ENCODE measurements at regions of chr11 and their contacts with region 1.

Region 1: GRCh38 chr11:45233121-45233803 is 52.9 kb downstream of the SYT13 start:
- DNase-seq: peak; percentile 38 to 69 (median 58)
- H3K4me3 ChIP-seq: no peak overlapping the region
- H3K27ac ChIP-seq: no peak overlapping the region
- H3K4me1 ChIP-seq: peaks cover 0 to 8% (median under 1%) of the 10 kb centered on the region in 4 experiments
- H3K27me3 ChIP-seq: peaks cover 0 to 3% (median 0%) of the 10 kb centered on the region in 5 experiments

Region 2: GRCh38 chr11:45158198-45158731 is 75.0 kb before region 1 on chr11:
- CTCF ChIA-PET with region 1: no interaction called
- POLR2A ChIA-PET with region 1: no interaction called
- DNase-seq: no peak
- H3K4me3 ChIP-seq: peak overlapping the region in 1 of 7 experiments; percentile 10
- H3K27ac ChIP-seq: peak overlapping the region in 1 of 2 experiments; percentile 55
- H3K4me1 ChIP-seq: peaks cover 0 to 52% (median 45%) of the 10 kb centered on the region in 4 experiments
- H3K27me3 ChIP-seq: no peaks in the 10 kb centered on the region

Region 3: DNA sequence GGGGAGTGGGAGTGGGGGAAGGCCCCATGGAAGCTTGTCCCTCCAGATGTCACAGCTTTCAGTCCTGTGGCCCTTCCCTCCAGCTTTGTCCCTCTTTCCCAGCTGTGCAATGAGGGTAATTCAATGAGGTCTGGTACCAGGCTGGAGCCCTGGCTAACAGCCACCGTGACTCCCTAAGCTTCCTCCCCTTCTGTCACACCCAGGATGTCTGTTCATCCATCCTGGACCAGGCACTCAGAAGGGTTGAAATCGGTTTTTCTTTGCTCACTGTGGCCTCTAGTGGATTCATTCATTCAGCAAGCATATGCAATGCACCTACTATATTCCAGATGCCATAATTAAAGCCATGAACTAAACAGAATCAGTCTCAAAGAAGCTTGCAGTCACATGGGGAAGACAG is 14.2 kb after region 1 on chr11:
- CTCF ChIA-PET with region 1: interaction called, 26 read pairs
- POLR2A ChIA-PET with region 1: no interaction called
- DNase-seq: no peak
- H3K4me3 ChIP-seq: no peak overlapping the region
- H3K27ac ChIP-seq: no peak overlapping the region
- H3K4me1 ChIP-seq: no peaks in the 10 kb centered on the region
- H3K27me3 ChIP-seq: no peaks in the 10 kb centered on the region

Region 4: DNA sequence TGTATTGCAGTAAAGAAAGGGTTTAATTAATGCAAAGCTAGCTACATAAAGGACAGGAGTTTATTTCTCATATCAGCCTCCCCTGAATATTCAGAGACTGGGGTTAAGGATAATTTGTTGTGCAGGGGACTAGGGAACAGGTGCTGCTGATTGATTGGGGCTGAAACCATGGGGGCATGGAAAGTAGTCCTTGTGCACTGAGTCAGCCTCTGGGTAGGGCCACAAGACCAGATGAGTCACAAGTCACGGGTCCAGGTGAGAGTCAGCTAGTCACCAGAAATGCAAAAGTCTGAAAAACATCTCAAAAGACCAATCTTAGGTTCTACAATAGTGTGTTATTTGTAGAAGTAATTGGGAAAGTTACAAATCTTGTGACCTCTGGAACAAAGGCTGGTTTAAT is 85.8 kb after region 1 on chr11:
- CTCF ChIA-PET with region 1: no interaction called
- POLR2A ChIA-PET with region 1: no interaction called
- DNase-seq: no peak
- H3K4me3 ChIP-seq: no peak overlapping the region
- H3K27ac ChIP-seq: no peak overlapping the region
- H3K4me1 ChIP-seq: no peaks in the 10 kb centered on the region
- H3K27me3 ChIP-seq: peaks cover 0 to 7% (median 0%) of the 10 kb centered on the region in 5 experiments